AG04450 (cell line): ENCODE measurements at regions of chr6 and their contacts with region 1.

Region 1: GRCh38 chr6:81752138-81752920 is at the start of gene TENT5A:
- DNase-seq: peak; percentile 75
- H3K4me3 ChIP-seq: peak within 1 kb of the TSS; percentile 91
- H3K27ac ChIP-seq: peak within 1 kb of the TSS; percentile 95
- H3K27me3 ChIP-seq: no peaks in the 10 kb centered on the region
- CTCF ChIP-seq: no peak; the same call in none of the 2 replicates
- polyA plus RNA-seq, gene TENT5A: 10.0 and 14.0 TPM in 2 replicates

Region 2: GRCh38 chr6:80579391-80580023 is 1172.8 kb before region 1 on chr6:
- CTCF ChIA-PET with region 1: no interaction called
- POLR2A ChIA-PET with region 1: interaction called, 10 read pairs
- DNase-seq: no peak
- H3K4me3 ChIP-seq: no peak overlapping the region
- H3K27ac ChIP-seq: no peak overlapping the region
- H3K27me3 ChIP-seq: no peaks in the 10 kb centered on the region
- CTCF ChIP-seq: no peak

Region 3: DNA sequence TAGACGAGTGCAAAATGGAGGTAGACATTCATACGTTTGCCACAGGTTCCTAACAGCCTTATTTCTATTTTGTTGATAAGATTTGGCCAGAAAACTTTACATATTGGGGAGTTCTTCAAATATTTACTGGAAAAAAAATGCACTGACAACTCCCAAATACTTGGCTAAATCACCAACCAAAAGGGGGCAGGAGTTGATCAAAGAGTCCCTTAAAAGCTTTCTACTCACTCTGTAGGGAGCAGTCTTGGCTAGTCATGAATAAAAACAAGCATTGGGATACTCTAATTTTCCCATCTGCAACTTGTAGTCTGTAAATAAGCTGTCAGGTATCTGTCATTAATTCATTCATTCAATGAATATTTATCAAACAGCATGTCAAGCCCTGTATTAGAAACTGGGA is 18.2 kb before region 1 on chr6:
- CTCF ChIA-PET with region 1: no interaction called
- POLR2A ChIA-PET with region 1: no interaction called
- DNase-seq: no peak
- H3K4me3 ChIP-seq: no peak overlapping the region
- H3K27ac ChIP-seq: no peak overlapping the region
- H3K27me3 ChIP-seq: no peaks in the 10 kb centered on the region
- CTCF ChIP-seq: no peak

Region 4: GRCh38 chr6:81894788-81895271 is 142.5 kb after region 1 on chr6:
- CTCF ChIA-PET with region 1: interaction called, 5 read pairs
- POLR2A ChIA-PET with region 1: interaction called, 13 read pairs
- DNase-seq: no peak
- H3K4me3 ChIP-seq: peak overlapping the region; percentile 17
- H3K27ac ChIP-seq: peak overlapping the region; percentile 65
- H3K27me3 ChIP-seq: no peaks in the 10 kb centered on the region
- CTCF ChIP-seq: no peak

Region 5: DNA sequence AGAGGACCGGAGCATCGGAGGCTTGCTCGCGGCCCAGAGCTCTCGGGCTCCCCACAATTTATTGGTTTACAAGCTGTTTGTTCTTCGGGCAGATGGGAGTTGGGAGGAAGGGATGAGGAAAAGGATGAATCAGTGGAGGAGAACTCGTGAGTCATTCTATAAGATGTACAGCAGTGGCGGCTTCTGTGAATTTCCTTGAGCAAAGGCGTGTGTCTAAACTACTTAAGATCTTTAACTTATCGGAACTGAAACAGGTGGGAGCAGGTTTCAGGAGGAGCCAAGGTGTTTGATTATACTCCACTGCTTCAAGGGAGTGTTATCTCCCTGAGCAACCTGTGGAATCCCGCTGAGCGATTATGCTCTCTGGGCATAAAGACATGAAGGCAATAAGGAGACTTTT is 545.7 kb after region 1 on chr6:
- CTCF ChIA-PET with region 1: no interaction called
- POLR2A ChIA-PET with region 1: no interaction called
- DNase-seq: peak; percentile 1
- H3K4me3 ChIP-seq: no peak overlapping the region
- H3K27ac ChIP-seq: no peak overlapping the region
- H3K27me3 ChIP-seq: no peaks in the 10 kb centered on the region
- CTCF ChIP-seq: no peak